ENCODE measurements at regions of chr1 and their contacts with region 1.

Region 1: GRCh38 chr1:37449936-37450335 is 24.4 kb upstream of the ZC3H12A start:
- DNase-seq: peak in 1 of 4 donors; percentile 51
- ATAC-seq: peak; percentile 11
- H3K4me3 ChIP-seq: no peak overlapping the region
- H3K27ac ChIP-seq: no peak overlapping the region
- H3K4me1 ChIP-seq: peaks cover 0 to 4% of the 10 kb centered on the region in 2 donors
- H3K27me3 ChIP-seq: peaks cover 0 to 35% of the 10 kb centered on the region in 2 donors
- CTCF ChIP-seq: no peak

Region 2: GRCh38 chr1:37486680-37487618 is 37.0 kb after region 1 on chr1:
- intact Hi-C with region 1: loop called in 1 of 2 experiments (anchors 5 kb)
- DNase-seq: peak in 3 of 4 donors; percentile 57 to 94 (median 74)
- ATAC-seq: peak; percentile 90
- H3K4me3 ChIP-seq: no peak overlapping the region
- H3K27ac ChIP-seq: peak overlapping the region; percentile 74 to 85
- H3K4me1 ChIP-seq: peaks cover 36 to 58% of the 10 kb centered on the region in 2 donors
- H3K27me3 ChIP-seq: no peaks in the 10 kb centered on the region
- CTCF ChIP-seq: peak; percentile 98

Measured in left lung (tissue), 14 donors.